ENCODE measurements at regions of chr1 and their contacts with region 1.

Region 1: DNA sequence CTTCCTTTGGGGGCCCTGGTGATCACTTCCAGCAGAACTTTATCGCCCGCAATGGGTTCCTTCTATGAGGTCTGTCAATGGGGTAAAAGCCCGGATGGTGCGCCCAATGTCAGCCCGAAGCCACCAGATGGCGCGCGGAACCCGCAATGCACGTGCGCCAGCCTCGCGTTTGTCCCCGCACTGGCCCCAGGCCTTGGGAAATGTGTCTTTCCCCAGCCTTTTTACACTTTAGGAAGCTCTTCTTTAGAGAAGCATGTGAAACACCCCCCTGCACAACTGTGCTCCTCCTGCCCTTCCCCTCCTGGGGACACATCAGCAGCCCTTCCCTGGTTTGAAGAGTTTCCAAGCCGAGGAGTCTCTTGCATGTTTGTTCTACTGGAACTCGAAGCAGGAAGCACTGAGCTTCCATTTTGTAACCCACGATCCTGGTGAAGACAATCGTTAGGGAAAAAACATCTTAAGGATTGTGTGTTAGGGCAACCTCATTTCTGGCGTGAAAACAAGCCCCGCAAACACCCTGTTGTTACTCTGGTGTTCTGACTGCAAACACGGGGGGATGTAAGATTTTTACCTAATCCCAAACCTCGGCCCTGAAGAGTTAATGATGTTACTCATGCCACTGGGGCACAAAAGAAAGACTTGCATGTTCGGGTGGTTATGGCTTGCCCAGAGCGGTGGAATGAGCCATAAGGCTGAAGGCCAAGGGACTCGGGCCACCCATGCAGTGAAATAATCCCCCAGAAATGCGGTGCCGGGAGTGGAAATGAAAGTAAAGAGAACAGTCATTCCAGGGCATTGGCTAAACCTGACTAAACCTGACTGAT is 20.4 kb upstream of the TARBP1 start:
- DNase-seq: peak; percentile 88 to 95 (median 93)
- H3K4me3 ChIP-seq: peak overlapping the region; percentile 2
- H3K27ac ChIP-seq: peak overlapping the region; percentile 58 to 74
- H3K4me1 ChIP-seq: peaks cover 8% of the 10 kb centered on the region
- H3K27me3 ChIP-seq: no peaks in the 10 kb centered on the region
- CTCF ChIP-seq: peak; percentile 86 to 98 (median 93)
- EP300 ChIP-seq: no peak
- POLR2A ChIP-seq: peak; percentile 35

Region 2: GRCh38 chr1:234533975-234534876 is 34.9 kb after region 1 on chr1:
- intact Hi-C with region 1: loop called in 1 of 4 experiments (anchors 2 kb)
- DNase-seq: peak; percentile 94 to 99 (median 98)
- H3K4me3 ChIP-seq: no peak overlapping the region
- H3K27ac ChIP-seq: peak overlapping the region; percentile 84 to 98
- H3K4me1 ChIP-seq: peaks cover 44% of the 10 kb centered on the region
- H3K27me3 ChIP-seq: no peaks in the 10 kb centered on the region
- CTCF ChIP-seq: no peak
- EP300 ChIP-seq: peak; percentile 29
- POLR2A ChIP-seq: no peak

Region 3: GRCh38 chr1:234610348-234611152 is 111.2 kb after region 1 on chr1:
- intact Hi-C with region 1: loop called in 3 of 4 experiments (anchors 2 to 10 kb)
- DNase-seq: peak; percentile 96 to 98 (median 97)
- H3K4me3 ChIP-seq: peak overlapping the region; percentile 46
- H3K27ac ChIP-seq: peak overlapping the region; percentile 85 to 98
- H3K4me1 ChIP-seq: peaks cover 19% of the 10 kb centered on the region
- H3K27me3 ChIP-seq: no peaks in the 10 kb centered on the region
- CTCF ChIP-seq: peak in 2 of 3 donors; percentile 37 to 53
- EP300 ChIP-seq: no peak
- POLR2A ChIP-seq: peak; percentile 95

Region 4: DNA sequence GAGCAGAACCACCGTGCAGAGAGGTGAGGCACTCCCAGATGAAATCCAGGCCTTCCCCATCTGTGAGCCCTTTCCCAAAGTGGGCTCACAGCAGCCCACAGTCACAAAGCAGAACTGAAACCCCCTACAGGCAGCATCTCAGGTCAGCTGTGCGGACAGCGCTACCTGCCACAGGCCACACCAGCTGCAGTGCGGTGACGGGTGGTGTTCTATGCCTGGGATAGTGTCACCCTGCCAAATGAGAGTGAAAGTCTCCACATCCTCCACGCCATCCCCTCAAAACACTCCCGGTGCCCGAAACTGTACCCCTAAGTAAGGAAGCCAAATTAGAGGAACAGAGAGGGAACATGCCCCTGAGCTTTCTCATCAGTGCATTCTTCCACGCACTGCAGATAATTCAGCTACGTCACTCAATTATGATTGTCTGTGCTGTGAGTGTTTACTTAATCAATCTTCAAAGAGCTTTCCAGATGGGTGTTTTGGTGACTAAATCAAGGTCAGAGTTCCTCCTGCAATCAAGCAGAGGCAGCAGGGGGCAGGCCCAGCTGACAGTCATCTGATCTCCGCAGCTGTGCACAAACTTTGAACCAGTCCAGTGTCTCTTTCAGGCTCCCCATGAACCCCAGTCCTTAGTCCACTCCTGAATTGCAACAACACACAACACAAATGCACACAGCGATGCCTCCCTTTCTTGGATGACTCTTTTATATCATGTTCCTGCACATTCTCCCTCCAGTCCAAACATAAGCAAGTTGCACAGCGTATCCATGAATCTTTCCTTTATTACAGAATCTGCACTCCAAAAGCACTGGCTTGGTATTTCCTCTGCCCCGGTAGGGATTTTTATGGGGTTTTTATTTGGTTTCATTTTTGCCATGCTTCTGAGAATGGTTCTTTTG is 479.3 kb after region 1 on chr1:
- intact Hi-C with region 1: loop called in 1 of 4 experiments (anchors 10 kb)
- DNase-seq: peak in 1 of 5 donors; percentile 56
- H3K4me3 ChIP-seq: no peak overlapping the region
- H3K27ac ChIP-seq: peak overlapping the region in 1 of 2 donors; percentile 83
- H3K4me1 ChIP-seq: peaks cover 34% of the 10 kb centered on the region
- H3K27me3 ChIP-seq: no peaks in the 10 kb centered on the region
- CTCF ChIP-seq: no peak
- EP300 ChIP-seq: no peak
- POLR2A ChIP-seq: no peak

Region 5: DNA sequence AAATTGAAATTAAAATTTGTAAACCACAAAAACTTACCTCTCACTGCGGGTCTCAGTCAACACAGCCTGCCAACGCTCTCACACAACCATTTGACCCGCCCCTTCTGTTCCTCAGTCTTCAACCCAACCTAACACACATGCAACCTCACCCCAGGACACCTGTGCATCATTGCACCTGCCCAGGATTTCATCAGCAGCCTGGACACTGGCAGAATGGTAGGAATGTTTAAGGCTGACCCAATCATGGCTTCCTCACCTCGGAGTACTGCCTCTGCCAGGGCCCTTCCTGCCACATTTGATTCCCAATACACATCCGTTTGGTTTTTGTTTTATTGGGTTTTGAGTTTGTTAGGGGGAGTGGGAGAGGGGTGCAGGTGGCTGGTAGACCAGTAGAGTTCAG is 588.6 kb after region 1 on chr1:
- intact Hi-C with region 1: loop called in 3 of 4 experiments (anchors 2 to 5 kb)
- DNase-seq: no peak
- H3K4me3 ChIP-seq: no peak overlapping the region
- H3K27ac ChIP-seq: no peak overlapping the region
- H3K4me1 ChIP-seq: no peaks in the 10 kb centered on the region
- H3K27me3 ChIP-seq: no peaks in the 10 kb centered on the region
- CTCF ChIP-seq: no peak
- EP300 ChIP-seq: no peak
- POLR2A ChIP-seq: no peak